ENCODE measurements at regions of chr2 and their contacts with region 1.

Region 1: GRCh38 chr2:70340921-70341765 is 39.3 kb upstream of the FAM136A start:
- DNase-seq: peak in 1 of 2 donors; percentile 11
- ATAC-seq: no peak
- H3K4me3 ChIP-seq: no peak overlapping the region
- H3K27ac ChIP-seq: no peak overlapping the region
- H3K4me1 ChIP-seq: no peaks in the 10 kb centered on the region
- H3K27me3 ChIP-seq: no peaks in the 10 kb centered on the region
- CTCF ChIP-seq: peak in 4 of 5 experiments; percentile 38 to 62 (median 54)
- POLR2A ChIP-seq: no peak

Region 2: DNA sequence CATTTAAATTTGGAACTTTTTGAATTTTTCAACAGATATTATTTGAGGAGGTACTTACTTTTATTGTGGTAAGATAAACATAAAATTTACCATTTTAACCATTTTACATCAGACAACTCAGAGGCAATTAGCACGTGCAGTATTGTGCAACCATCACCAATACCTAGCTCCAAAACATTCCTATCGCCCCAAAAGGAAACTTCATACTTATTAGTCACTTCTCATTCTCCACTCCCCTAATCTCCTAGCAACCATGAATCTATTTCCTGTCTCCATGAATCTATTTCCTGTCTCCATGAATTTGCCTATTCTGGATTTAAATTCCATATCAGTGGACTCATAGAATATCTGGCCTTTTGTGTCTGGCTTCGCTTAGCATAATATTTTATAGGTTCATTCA is 30.6 kb after region 1 on chr2:
- in situ Hi-C with region 1: no loop called
- intact Hi-C with region 1: no loop called
- DNase-seq: no peak
- ATAC-seq: no peak
- H3K4me3 ChIP-seq: no peak overlapping the region
- H3K27ac ChIP-seq: no peak overlapping the region
- H3K4me1 ChIP-seq: no peaks in the 10 kb centered on the region
- H3K27me3 ChIP-seq: no peaks in the 10 kb centered on the region
- CTCF ChIP-seq: no peak
- POLR2A ChIP-seq: no peak

Region 3: GRCh38 chr2:70472221-70472890 is 131.2 kb after region 1 on chr2:
- in situ Hi-C with region 1: no loop called
- intact Hi-C with region 1: no loop called
- DNase-seq: no peak
- ATAC-seq: no peak
- H3K4me3 ChIP-seq: no peak overlapping the region
- H3K27ac ChIP-seq: no peak overlapping the region
- H3K4me1 ChIP-seq: no peaks in the 10 kb centered on the region
- H3K27me3 ChIP-seq: peaks cover 0 to 2% (median 0%) of the 10 kb centered on the region in 3 donors
- CTCF ChIP-seq: no peak
- POLR2A ChIP-seq: no peak

Region 4: DNA sequence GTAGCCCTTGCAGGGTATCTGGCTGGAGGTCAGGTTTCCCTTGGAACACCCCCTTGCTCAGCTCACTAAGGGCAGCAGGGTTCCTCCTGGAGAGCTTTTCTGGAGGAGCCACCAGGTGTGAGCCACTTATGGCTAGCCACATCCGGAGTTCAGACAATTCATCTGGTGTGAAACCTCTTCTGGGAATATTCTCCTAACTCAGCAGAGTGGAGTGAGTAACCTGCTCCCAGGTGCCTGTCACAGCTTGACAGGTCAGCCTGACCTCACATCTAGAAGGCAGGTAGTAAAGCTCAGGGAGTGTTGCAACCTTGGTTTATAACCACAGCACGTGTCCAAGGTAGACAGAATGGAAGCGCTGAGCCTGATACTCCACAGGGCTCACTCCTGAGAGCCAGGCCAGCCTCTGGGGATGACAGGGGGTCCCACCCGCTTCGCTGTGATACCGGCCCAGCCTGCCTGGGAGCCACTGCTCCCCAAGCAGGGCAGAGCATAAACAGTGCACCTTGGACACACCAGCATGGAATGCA is 275.1 kb after region 1 on chr2:
- in situ Hi-C with region 1: loop called in 2 of 4 experiments (anchors 5 to 10 kb)
- intact Hi-C with region 1: loop called (anchors 1 kb)
- DNase-seq: no peak
- ATAC-seq: no peak
- H3K4me3 ChIP-seq: no peak overlapping the region
- H3K27ac ChIP-seq: no peak overlapping the region
- H3K4me1 ChIP-seq: no peaks in the 10 kb centered on the region
- H3K27me3 ChIP-seq: no peaks in the 10 kb centered on the region
- CTCF ChIP-seq: no peak
- POLR2A ChIP-seq: no peak

Region 5: GRCh38 chr2:70647873-70648481 is 306.8 kb after region 1 on chr2:
- in situ Hi-C with region 1: loop called in 2 of 4 experiments (anchors 25 kb)
- intact Hi-C with region 1: no loop called
- DNase-seq: no peak
- ATAC-seq: no peak
- H3K4me3 ChIP-seq: no peak overlapping the region
- H3K27ac ChIP-seq: no peak overlapping the region
- H3K4me1 ChIP-seq: no peaks in the 10 kb centered on the region
- H3K27me3 ChIP-seq: no peaks in the 10 kb centered on the region
- CTCF ChIP-seq: peak; percentile 34 to 74 (median 52)
- POLR2A ChIP-seq: no peak

Measured in gastrocnemius medialis (tissue), 4 donors.